ENCODE measurements at regions of chr12 and their contacts with region 1.

Region 1: GRCh38 chr12:62210422-62210821 is 49.8 kb upstream of the USP15 start:
- DNase-seq: no peak
- H3K4me3 ChIP-seq: no peak overlapping the region
- H3K27ac ChIP-seq: no peak overlapping the region
- H3K4me1 ChIP-seq: peaks cover 6% of the 10 kb centered on the region
- H3K27me3 ChIP-seq: no peaks in the 10 kb centered on the region
- CTCF ChIP-seq: peak; percentile 90 to 91

Region 2: DNA sequence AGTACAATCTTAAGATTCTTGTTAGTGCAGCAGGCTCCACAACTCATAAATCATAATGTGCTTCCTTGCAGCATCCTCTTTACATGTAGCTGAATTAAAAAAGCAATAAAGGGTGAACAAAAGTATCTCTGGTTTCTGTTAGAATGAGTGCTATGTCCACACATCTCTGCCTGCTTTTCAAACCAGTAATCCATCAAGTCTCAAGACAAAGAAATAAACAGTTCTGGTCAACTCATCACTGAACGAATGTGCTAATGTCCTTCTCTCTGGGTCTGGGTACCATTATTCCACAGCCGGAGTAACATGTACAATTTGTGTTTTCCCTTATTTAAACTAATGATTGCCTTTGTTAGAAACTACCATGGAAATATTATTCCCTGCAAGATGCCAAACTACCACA is 223.2 kb before region 1 on chr12:
- CTCF ChIA-PET with region 1: no interaction called
- dilution Hi-C with region 1: no loop called
- in situ Hi-C with region 1: no loop called
- intact Hi-C with region 1: no loop called
- DNase-seq: no peak
- H3K4me3 ChIP-seq: no peak overlapping the region
- H3K27ac ChIP-seq: no peak overlapping the region
- H3K4me1 ChIP-seq: no peaks in the 10 kb centered on the region
- H3K27me3 ChIP-seq: no peaks in the 10 kb centered on the region
- CTCF ChIP-seq: no peak

Region 3: DNA sequence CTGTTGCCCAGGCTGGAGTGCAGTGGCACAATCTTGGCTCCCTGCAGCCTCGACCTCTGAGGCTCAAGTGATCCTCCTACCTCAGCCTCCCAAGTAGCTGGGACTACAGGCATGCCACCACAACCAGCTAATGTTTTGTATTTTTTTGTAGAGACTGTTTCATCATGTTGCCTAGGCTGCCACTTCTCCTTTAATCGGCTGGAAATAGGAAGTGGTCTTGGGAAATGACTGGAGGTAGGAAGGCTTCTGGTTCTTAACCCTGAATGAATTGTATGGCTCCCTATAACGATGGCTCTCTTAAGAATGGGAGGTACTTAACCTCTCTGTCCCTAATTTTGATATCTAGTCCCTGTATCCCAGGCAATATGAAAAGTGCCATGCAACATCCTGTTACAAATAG is 64.1 kb before region 1 on chr12:
- CTCF ChIA-PET with region 1: interaction called, 23 read pairs
- dilution Hi-C with region 1: no loop called
- in situ Hi-C with region 1: no loop called
- intact Hi-C with region 1: no loop called
- DNase-seq: no peak
- H3K4me3 ChIP-seq: no peak overlapping the region
- H3K27ac ChIP-seq: no peak overlapping the region
- H3K4me1 ChIP-seq: no peaks in the 10 kb centered on the region
- H3K27me3 ChIP-seq: peaks cover 2% of the 10 kb centered on the region
- CTCF ChIP-seq: no peak

Region 4: GRCh38 chr12:62232143-62232729 is 21.8 kb after region 1 on chr12:
- CTCF ChIA-PET with region 1: no interaction called
- dilution Hi-C with region 1: no loop called
- in situ Hi-C with region 1: no loop called
- intact Hi-C with region 1: no loop called
- DNase-seq: no peak
- H3K4me3 ChIP-seq: no peak overlapping the region
- H3K27ac ChIP-seq: no peak overlapping the region
- H3K4me1 ChIP-seq: no peaks in the 10 kb centered on the region
- H3K27me3 ChIP-seq: no peaks in the 10 kb centered on the region
- CTCF ChIP-seq: no peak

Region 5: GRCh38 chr12:62250671-62251608 is 40.5 kb after region 1 on chr12:
- CTCF ChIA-PET with region 1: no interaction called
- dilution Hi-C with region 1: no loop called
- in situ Hi-C with region 1: no loop called
- intact Hi-C with region 1: loop called (anchors 5 kb)
- DNase-seq: peak; percentile 74
- H3K4me3 ChIP-seq: no peak overlapping the region
- H3K27ac ChIP-seq: no peak overlapping the region
- H3K4me1 ChIP-seq: peaks cover 30% of the 10 kb centered on the region
- H3K27me3 ChIP-seq: no peaks in the 10 kb centered on the region
- CTCF ChIP-seq: no peak

Measured in mammary epithelial cell (primary cell).